Gastrocnemius medialis (tissue), 4 donors: ENCODE measurements at regions of chr2 and their contacts with region 1.

Region 1: GRCh38 chr2:202634556-202635427 is at the start of gene FAM117B:
- DNase-seq: peak; percentile 97
- ATAC-seq: peak; percentile 91 to 93
- H3K4me3 ChIP-seq: peak within 1 kb of the TSS; percentile 95 to 99 (median 97)
- H3K27ac ChIP-seq: peak within 1 kb of the TSS; percentile 94 to 99 (median 97)
- H3K4me1 ChIP-seq: peaks cover 20 to 30% of the 10 kb centered on the region in 2 donors
- H3K27me3 ChIP-seq: no peaks in the 10 kb centered on the region
- CTCF ChIP-seq: peak in 1 of 5 experiments; percentile 15
- POLR2A ChIP-seq: peak; percentile 68 to 91
- total RNA-seq, gene FAM117B: 1.5 to 4.5 (median 2.9) TPM

Region 2: DNA sequence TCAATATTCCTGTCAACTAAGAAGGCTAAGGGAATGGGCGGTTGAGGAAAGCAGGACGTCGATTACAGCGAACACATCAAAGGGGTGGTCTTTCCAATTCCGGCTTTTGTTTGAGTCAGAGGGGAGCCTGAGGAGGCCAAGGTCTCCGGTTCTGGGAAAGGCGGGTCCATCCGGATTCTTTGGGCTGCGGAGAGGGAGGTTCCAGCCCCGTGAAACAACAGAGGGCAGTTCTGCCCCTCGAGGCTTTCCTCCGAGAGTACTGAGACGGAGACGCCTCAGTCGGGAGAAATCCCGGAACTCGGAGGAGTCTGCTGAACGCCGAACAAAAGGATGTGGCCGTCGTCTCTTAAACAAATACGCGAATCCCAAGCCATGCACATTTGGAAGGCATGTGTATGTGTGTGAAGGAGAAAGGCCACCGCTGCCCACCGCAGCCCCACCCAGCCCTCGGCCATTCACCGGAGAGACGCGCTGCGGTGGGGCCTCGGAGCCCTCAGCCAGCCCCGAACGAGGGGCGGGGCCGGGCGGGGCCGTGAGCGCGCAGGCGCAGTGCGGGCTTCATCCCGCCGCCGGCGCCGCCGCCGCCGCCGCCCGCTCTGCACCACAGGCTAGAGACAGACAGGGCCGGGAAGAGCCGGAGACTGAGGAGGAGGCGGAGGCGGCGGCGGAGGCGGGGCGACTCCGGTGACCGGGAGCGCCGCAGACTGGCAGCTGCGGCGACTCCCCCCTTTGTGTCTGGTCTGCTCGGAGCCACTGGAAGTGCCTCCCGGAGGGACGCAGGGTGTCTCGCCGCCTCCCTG is 259.0 kb before region 1 on chr2 and contains the start of gene BMPR2:
- in situ Hi-C with region 1: no loop called
- intact Hi-C with region 1: loop called (anchors 5 kb)
- DNase-seq: peak; percentile 86 to 91
- ATAC-seq: peak; percentile 78 to 81
- H3K4me3 ChIP-seq: peak within 1 kb of the TSS; percentile 82 to 95 (median 90)
- H3K27ac ChIP-seq: peak within 1 kb of the TSS; percentile 89 to 99 (median 97)
- H3K4me1 ChIP-seq: peaks cover 19 to 22% of the 10 kb centered on the region in 2 donors
- H3K27me3 ChIP-seq: no peaks in the 10 kb centered on the region
- CTCF ChIP-seq: no peak
- POLR2A ChIP-seq: peak; percentile 85 to 92
- total RNA-seq, gene BMPR2: 25.0 to 35.0 (median 27.2) TPM

Region 3: DNA sequence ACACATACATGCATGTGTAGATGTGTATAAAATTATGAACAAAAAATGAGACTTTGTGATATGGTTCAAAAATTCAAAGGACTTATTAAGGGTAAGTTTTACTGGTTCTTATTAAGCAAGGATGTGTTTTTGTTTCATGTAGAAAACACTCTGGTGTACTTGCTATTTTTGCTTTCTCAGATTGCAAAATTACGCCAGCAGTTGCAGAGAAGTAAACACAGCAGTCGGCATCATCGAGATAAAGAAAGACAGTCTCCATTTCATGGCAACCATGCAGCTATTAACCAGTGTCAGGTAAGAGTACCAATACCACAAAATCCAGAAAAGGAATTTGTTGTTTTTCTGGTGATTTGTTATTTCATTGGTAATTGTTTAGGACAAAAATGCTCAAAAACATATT is 91.3 kb after region 1 on chr2:
- in situ Hi-C with region 1: no loop called
- intact Hi-C with region 1: loop called (anchors 5 kb)
- DNase-seq: no peak
- ATAC-seq: peak; percentile 74 to 77
- H3K4me3 ChIP-seq: peak overlapping the region in 2 of 4 donors; percentile 18 to 30
- H3K27ac ChIP-seq: peak overlapping the region in 1 of 4 donors; percentile 63
- H3K4me1 ChIP-seq: peaks cover 0 to 6% of the 10 kb centered on the region in 2 donors
- H3K27me3 ChIP-seq: no peaks in the 10 kb centered on the region
- CTCF ChIP-seq: no peak
- POLR2A ChIP-seq: peak in 1 of 2 donors; percentile 38

Region 4: GRCh38 chr2:202870431-202871299 is 235.9 kb after region 1 on chr2:
- in situ Hi-C with region 1: no loop called
- intact Hi-C with region 1: loop called (anchors 5 kb)
- DNase-seq: peak; percentile 47 to 74
- ATAC-seq: peak; percentile 78 to 85
- H3K4me3 ChIP-seq: peak overlapping the region; percentile 72 to 88 (median 84)
- H3K27ac ChIP-seq: peak overlapping the region; percentile 73 to 84 (median 79)
- H3K4me1 ChIP-seq: peaks cover 6 to 10% of the 10 kb centered on the region in 2 donors
- H3K27me3 ChIP-seq: no peaks in the 10 kb centered on the region
- CTCF ChIP-seq: no peak
- POLR2A ChIP-seq: peak; percentile 23 to 58

Region 5: GRCh38 chr2:203014456-203015199 is 379.8 kb after region 1 on chr2 and contains the start of gene NBEAL1:
- in situ Hi-C with region 1: no loop called
- intact Hi-C with region 1: loop called (anchors 5 kb)
- DNase-seq: peak; percentile 97 to 98
- ATAC-seq: peak; percentile 94 to 97
- H3K4me3 ChIP-seq: peak within 1 kb of the TSS; percentile 70 to 88 (median 78)
- H3K27ac ChIP-seq: peak within 1 kb of the TSS; percentile 90 to 96 (median 94)
- H3K4me1 ChIP-seq: peaks cover 36 to 42% of the 10 kb centered on the region in 2 donors
- H3K27me3 ChIP-seq: no peaks in the 10 kb centered on the region
- CTCF ChIP-seq: no peak
- POLR2A ChIP-seq: peak; percentile 76 to 86
- total RNA-seq, gene NBEAL1: 9.8 to 21.9 (median 11.3) TPM